ENCODE measurements at regions of chr10 and their contacts with region 1.

Region 1: DNA sequence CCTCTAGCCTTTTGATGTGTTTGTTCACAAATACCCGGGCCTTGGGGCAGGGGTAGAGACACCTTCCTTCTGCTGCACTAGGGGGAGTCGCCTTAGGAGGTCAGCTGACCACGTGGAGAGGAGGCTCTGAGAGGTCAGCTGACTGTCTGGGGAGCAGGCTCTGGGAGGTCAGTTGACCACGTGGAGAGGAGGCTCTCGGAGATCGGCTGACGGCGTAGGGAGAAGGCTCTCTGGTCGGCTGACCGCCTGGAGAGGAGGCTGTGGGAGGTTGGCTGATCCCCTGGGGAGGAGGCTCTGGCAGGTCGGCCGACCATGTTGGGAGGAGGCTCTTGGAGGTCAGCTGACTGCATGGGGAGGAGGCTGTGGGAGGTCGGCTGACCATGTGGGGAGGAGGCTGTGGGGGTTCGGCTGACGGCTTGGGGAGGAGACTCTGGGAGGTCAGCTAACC is 59.6 kb upstream of the LYZL1 start:
- DNase-seq: no peak
- ATAC-seq: no peak
- H3K4me3 ChIP-seq: no peak overlapping the region
- H3K27ac ChIP-seq: no peak overlapping the region
- H3K4me1 ChIP-seq: no peaks in the 10 kb centered on the region
- H3K27me3 ChIP-seq: no peaks in the 10 kb centered on the region
- CTCF ChIP-seq: no peak

Region 2: GRCh38 chr10:28676968-28677887 is 552.1 kb before region 1 on chr10 and contains the start of gene BAMBI:
- CTCF ChIA-PET with region 1: interaction called, 15 read pairs
- POLR2A ChIA-PET with region 1: no interaction called
- in situ Hi-C with region 1: no loop called
- intact Hi-C with region 1: no loop called
- DNase-seq: no peak
- ATAC-seq: peak; percentile 98
- H3K4me3 ChIP-seq: peak within 1 kb of the TSS; percentile 41 to 52
- H3K27ac ChIP-seq: no peak within 1 kb of the TSS
- H3K4me1 ChIP-seq: peaks cover 10% of the 10 kb centered on the region
- H3K27me3 ChIP-seq: peaks cover 16% of the 10 kb centered on the region
- CTCF ChIP-seq: peak; percentile 84
- total RNA-seq, gene BAMBI: 3.9 TPM